GM10248 (cell line): ENCODE measurements at regions of chr6 and their contacts with region 1.

Region 1: GRCh38 chr6:125314019-125314581 is 12.3 kb upstream of the HDDC2 start:
- DNase-seq: peak; percentile 41
- CTCF ChIP-seq: peak; percentile 85

Region 2: GRCh38 chr6:125301435-125302391 is 12.4 kb before region 1 on chr6 and contains the start of gene HDDC2:
- CTCF ChIA-PET with region 1: interaction called, 29 read pairs
- POLR2A ChIA-PET with region 1: no interaction called
- DNase-seq: peak; percentile 78
- CTCF ChIP-seq: no peak

Region 3: DNA sequence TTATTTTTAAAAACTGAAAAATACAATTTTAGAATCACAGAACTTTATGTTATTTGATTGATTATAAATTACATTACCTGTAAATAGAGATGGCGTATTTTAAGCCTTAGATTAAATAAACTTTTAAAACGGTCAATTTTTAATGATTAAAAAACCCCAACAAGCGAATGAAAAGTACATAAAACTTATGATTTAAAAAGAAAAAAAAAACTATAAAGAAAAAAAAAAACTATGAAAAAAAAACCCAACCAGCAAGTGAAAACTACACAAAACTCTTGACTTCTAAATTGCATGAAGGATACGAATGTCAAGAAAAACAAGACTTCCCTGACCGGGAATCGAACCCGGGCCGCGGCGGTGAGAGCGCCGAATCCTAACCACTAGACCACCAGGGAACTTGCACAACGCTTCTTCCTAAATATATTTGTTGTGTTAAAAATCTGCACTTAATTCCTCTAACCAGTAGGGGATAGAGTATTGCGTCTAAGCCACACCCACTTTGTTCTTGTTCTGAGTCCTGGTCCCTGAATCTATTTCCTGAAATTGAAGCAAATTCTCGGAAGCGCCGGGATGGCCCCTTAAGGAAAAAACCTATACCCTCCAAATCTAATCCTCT is 465.9 kb after region 1 on chr6:
- CTCF ChIA-PET with region 1: interaction called, 13 read pairs
- POLR2A ChIA-PET with region 1: no interaction called
- DNase-seq: peak; percentile 86
- CTCF ChIP-seq: no peak

Region 4: GRCh38 chr6:126048635-126049034 is 734.5 kb after region 1 on chr6:
- CTCF ChIA-PET with region 1: no interaction called
- POLR2A ChIA-PET with region 1: no interaction called
- DNase-seq: no peak
- CTCF ChIP-seq: no peak